Posterior cingulate gyrus (tissue), 11 donors: ENCODE measurements at regions of chr9 and their contacts with region 1.

Region 1: DNA sequence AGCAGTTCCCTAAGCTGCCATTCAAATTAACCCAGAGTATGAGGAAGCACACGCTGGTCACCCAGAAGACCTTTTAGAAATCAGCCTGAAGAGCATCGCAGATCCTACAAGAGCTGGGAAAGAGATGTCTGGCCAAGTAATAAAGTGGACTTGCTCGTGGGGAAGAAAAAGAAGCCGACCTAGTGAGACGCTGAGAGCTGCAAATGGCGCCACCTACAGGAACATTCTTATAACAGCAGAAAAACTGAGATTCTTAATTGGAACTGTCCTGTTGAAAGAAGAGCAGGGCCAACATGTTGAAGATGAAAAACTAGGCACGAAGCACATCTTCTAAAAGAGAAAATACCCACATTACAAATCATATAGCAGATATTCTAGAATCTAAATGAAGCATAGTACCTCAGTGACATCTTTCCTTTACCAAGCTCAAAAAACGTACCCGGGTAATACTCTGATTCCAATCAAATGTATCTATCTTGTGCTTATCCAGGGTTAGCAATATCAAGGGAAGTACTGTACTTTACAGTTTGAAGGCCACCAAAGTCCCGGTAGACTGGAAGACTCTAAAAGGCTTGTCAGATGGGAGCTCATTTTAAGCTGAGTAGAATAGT is 3.9 kb upstream of the GNAQ start:
- DNase-seq: peak in 7 of 10 donors; percentile 35 to 90 (median 46)

Region 2: GRCh38 chr9:77433675-77434445 is 601.6 kb before region 1 on chr9:
- intact Hi-C with region 1: loop called (anchors 5 kb)
- DNase-seq: peak; percentile 52 to 97 (median 76)

Region 3: DNA sequence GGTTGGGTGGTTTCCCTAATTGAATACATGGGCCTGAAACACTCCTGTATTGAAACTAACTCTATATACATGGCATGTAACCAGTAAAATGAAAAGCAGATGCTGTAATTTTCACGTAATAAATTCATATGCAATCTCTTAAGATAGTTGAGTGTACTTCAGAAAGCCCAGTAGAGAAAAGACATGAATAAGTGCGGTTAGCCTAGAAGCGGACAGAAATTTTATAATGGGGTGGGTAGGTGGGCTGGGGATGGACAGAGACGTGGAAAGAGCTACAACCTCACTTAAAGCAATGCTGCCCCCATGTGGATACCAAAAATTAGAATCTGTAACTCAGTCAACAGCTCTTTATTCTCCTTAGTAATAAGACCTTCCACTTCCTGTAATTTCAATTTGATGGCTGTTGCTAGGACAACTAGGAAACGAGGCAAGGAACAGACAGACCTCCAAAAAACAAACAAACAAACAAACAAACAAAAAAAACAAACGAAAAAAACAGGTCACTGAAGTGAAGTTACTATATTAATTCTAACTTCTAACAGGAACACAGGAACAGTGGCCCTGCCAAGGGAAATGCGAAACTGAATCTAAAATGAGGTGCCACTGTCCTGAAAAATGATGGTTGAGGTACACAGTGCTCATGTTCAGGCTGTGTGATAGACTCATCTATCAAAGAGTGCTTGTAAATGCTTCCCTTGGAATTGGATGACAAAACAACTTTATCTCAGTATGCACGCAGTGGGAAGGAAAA is 284.0 kb before region 1 on chr9:
- intact Hi-C with region 1: loop called (anchors 10 kb)
- DNase-seq: peak in 1 of 10 donors; percentile 48

Region 4: GRCh38 chr9:77848897-77849296 is 186.6 kb before region 1 on chr9:
- intact Hi-C with region 1: loop called (anchors 5 kb)
- DNase-seq: peak in 7 of 10 donors; percentile 29 to 91 (median 43)

Region 5: DNA sequence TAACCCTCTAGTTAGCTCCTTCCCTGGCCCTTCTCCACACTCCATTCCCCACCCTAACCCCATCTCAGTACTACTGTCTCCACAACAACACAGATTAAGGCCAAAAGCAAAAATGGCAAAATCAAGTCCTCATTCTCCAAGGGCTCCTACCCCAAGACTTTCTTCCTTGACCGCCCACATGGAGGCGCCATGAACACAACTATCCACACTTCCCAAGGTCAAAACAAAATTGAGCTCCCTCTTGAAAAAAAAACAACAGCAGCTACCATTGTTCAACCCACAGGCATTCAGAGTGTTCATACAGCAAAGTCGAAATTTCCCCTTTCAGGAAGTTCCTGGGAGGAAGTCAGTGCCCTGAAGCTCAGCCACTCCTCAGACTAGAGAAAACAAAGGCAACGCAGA is 58.3 kb before region 1 on chr9:
- intact Hi-C with region 1: loop called (anchors 2 kb)
- DNase-seq: peak in 9 of 10 donors; percentile 27 to 93 (median 61)

Region 6: DNA sequence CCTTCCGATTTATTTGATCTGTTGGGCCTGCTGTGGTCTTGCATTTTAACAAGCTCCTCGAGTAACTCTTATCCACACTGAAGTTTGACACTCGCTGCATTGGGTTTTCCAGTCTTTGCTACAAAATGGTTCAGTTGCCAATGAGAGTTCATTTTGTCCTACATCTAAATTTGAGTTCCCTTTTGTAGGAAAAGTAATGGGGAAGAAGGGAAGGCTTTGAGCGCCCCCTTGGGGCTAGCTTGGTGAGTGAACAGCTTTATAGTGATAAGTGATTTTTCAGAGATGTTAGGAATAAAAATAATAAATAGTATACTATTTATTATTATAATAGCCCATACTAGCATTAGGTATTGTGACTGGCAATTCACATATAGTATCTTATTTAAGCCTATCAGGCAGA is 86.0 kb after region 1 on chr9:
- intact Hi-C with region 1: loop called (anchors 5 kb)
- DNase-seq: peak in 9 of 10 donors; percentile 41 to 95 (median 80)

Region 7: DNA sequence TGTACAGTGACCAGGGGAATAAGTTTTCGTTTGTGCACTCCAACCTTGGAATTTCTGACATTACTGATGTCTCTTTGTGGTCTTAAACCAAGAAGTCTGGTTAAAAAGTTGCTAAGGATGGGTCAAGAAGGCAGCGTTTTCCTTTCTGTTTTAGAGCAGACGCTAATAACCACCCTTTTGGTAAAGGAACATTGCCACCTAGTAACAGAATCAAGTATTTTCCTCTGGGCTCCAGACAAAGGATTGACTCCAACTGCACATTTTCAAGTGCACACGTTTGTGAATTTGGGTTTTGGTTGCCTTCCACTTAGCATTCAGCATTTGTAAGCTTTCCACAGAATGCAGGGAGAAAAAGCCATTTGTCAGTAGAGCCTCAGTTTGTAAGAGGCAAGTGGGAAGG is 178.2 kb after region 1 on chr9:
- intact Hi-C with region 1: loop called (anchors 5 kb)
- DNase-seq: no peak